ENCODE measurements at regions of chr4 and their contacts with region 1.

Region 1: DNA sequence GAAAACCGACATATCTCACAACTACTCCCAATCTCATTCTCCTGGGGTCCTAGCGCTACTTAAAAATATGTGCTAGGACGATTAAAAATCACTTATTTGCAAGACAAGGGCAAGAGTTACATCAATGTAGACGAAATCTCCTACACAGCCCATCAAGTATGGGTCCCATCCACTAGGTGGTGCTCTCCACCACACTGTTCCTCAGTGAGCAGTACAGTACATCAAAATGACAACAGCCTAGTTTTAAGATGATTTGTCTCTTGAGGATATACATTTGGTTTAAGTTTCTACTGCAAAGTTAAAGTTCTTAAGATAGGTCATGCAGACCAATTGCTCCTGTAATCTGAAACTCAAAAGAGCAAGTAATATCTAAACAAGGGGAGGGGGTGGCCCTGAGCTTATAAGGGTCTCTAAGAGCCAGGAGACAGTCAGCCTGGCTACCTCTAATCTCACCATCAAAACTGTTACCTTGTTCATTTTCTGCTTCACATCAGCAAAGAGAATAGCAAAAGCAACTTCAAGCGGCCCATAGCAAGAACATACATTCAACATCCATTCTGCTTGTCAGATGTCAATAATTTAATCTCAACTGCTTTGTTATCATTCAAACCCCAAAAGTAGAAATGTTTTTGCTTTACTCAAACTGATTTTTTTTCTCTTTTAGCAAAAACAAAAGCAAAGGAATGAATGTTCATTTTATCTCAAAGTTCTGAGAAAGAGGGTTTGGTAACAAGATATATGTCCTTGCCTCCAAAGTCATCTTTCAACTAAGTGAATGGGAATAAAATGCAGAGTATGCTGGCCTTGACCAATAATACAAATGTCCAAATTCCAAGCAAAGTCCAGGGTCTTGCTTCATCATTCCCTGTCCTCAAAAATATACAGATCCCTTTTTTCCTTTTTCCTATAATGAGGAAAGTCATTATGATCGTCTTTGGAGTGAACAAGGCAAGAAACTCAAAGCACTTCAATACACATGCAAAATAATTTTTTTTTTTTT is 53.1 kb downstream of the STX18 start:
- DNase-seq: peak; percentile 86
- ATAC-seq: peak; percentile 86
- H3K4me3 Mint-ChIP-seq: no peak overlapping the region
- H3K27ac Mint-ChIP-seq: no peak overlapping the region
- H3K4me1 Mint-ChIP-seq: peaks cover 12% of the 10 kb centered on the region
- H3K27me3 Mint-ChIP-seq: no peaks in the 10 kb centered on the region

Region 2: DNA sequence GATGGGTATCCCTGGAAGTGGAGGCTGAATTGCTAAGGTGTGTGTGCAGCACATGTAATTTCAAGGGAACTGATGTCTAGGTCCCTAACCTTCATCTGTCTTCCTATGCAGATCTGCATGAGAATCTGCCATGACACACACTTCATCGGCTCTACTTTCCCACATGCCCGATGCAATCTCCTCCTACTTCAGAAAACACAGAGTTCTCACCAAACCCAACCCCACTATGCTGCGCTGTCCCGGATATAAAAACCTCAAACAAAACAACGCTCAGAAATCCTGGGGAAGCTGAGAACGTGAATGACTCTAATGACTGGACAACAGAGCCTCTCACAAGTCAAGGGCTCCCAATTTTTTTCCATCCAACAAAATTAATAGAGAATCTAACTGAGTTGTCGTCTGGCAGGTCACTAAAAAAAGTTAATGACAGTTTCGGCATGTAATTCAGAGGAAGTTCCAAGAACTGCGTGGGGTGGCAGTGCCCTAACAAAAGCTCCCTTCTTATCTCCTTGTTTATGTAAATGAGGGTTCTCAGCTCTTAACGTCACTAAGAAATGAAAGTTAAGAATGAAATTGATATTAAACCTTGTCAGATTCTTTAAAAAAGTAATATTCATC is 14.1 kb after region 1 on chr4:
- CTCF ChIA-PET with region 1: interaction called, 6 read pairs
- POLR2A ChIA-PET with region 1: no interaction called
- intact Hi-C with region 1: loop called in 1 of 2 experiments (anchors 1 kb)
- DNase-seq: peak; percentile 55
- ATAC-seq: peak; percentile 96
- H3K4me3 Mint-ChIP-seq: peak overlapping the region; percentile 66
- H3K27ac Mint-ChIP-seq: peak overlapping the region; percentile 82
- H3K4me1 Mint-ChIP-seq: peaks cover 17% of the 10 kb centered on the region
- H3K27me3 Mint-ChIP-seq: no peaks in the 10 kb centered on the region

Region 3: DNA sequence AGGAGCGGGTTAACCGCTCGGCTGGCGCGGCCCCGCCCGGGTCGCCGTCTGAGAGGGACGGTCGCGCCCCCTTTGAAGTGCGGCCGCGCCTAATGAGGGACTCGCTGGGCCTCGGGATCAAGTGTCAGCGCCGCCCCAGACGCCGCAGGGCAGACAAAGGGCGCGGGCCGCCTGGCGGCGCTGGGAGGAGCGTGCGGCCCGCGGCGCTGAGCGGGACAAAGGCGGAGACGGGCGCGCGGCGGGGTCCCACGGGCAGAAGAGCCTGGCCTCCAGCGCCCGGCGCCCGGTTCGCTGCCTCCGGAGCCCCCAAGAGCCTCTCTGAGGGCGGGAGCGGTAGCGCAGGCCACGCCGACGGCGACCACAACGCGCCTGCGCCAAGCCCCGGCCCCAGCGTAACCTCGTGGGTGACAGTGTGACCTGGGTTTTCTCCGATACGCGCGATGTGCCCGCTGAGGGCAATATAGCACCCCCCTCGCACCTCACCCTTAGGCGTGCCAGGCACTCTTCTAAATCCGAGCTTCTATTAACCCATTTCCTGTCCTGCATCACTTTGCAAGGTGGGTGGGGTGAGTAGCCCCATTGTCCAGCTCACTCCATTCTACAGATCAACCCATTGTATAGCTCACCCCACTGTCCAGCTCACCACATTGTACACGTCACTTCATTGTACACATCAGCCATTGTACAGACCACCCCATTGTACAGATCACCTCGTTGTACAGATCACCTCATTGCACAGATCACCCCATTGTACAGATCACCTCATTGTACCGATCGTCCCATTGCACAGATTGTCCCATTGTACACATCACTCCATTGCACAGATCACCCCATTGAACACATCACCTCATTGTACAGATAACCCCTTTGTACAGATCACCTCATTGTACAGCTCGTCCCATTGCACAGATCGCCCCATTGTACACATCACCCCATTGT is 86.8 kb after region 1 on chr4:
- CTCF ChIA-PET with region 1: interaction called, 6 read pairs
- POLR2A ChIA-PET with region 1: no interaction called
- intact Hi-C with region 1: loop called in 1 of 2 experiments (anchors 1 kb)
- DNase-seq: peak; percentile 78
- ATAC-seq: peak; percentile 86
- H3K4me3 Mint-ChIP-seq: peak overlapping the region; percentile 60
- H3K27ac Mint-ChIP-seq: no peak overlapping the region
- H3K4me1 Mint-ChIP-seq: peaks cover 13% of the 10 kb centered on the region
- H3K27me3 Mint-ChIP-seq: no peaks in the 10 kb centered on the region

Region 4: GRCh38 chr4:4762909-4763821 is 274.5 kb after region 1 on chr4:
- CTCF ChIA-PET with region 1: no interaction called
- POLR2A ChIA-PET with region 1: no interaction called
- intact Hi-C with region 1: loop called (anchors 2 to 10 kb)
- DNase-seq: peak; percentile 72
- ATAC-seq: peak; percentile 98
- H3K4me3 Mint-ChIP-seq: no peak overlapping the region
- H3K27ac Mint-ChIP-seq: no peak overlapping the region
- H3K4me1 Mint-ChIP-seq: peaks cover 14% of the 10 kb centered on the region
- H3K27me3 Mint-ChIP-seq: peaks cover 10% of the 10 kb centered on the region

Region 5: GRCh38 chr4:4867375-4868039 is 378.8 kb after region 1 on chr4:
- CTCF ChIA-PET with region 1: interaction called, 4 read pairs
- POLR2A ChIA-PET with region 1: no interaction called
- intact Hi-C with region 1: loop called in 1 of 2 experiments (anchors 5 kb)
- DNase-seq: peak; percentile 46
- ATAC-seq: no peak
- H3K4me3 Mint-ChIP-seq: no peak overlapping the region
- H3K27ac Mint-ChIP-seq: no peak overlapping the region
- H3K4me1 Mint-ChIP-seq: peaks cover 17% of the 10 kb centered on the region
- H3K27me3 Mint-ChIP-seq: peaks cover 68% of the 10 kb centered on the region

Region 6: DNA sequence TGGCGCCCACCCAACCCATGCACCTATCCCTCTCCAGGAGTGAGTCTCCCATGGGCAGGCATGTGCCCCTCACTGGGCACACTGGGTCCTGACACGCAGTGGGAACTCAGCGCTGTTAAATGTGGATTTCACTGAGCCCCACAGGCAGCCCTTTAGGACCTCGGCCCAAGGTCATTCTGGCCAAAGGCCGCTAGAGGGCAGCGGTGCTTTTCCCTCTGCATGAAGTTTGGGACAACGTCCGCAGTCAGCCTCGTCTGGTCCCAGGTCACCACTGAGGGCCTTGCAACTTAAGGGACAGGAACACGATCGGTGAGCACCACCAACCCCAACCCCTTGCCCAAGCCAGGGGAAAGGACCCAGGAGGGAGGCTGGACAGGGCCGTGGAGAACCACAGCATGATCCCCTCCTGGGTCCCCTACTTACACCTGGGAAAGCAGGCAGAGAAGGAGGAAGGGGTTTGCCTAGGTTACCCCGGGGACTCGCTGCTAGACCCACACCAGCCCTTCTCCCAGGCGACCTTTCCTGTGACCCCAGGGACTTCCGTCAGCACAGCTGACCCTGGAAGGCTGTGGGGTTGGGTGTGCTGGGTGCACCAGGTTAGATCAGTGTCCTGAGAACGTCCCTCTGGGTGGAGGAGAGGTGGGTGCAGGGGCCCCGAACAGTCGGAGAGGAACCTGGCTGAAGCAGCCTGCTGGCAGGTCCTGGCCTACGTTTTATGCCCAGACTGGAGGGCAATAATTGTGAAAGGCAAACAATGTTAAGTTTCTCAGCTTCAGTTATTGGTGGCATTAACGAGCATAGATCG is 506.6 kb after region 1 on chr4:
- CTCF ChIA-PET with region 1: no interaction called
- POLR2A ChIA-PET with region 1: no interaction called
- intact Hi-C with region 1: loop called (anchors 2 to 5 kb)
- DNase-seq: peak; percentile 74
- ATAC-seq: peak; percentile 80
- H3K4me3 Mint-ChIP-seq: no peak overlapping the region
- H3K27ac Mint-ChIP-seq: no peak overlapping the region
- H3K4me1 Mint-ChIP-seq: no peaks in the 10 kb centered on the region
- H3K27me3 Mint-ChIP-seq: peaks cover 13% of the 10 kb centered on the region

Region 7: GRCh38 chr4:5812506-5813229 is 1324.0 kb after region 1 on chr4:
- CTCF ChIA-PET with region 1: no interaction called
- POLR2A ChIA-PET with region 1: no interaction called
- intact Hi-C with region 1: loop called in 1 of 2 experiments (anchors 5 kb)
- DNase-seq: peak; percentile 35
- ATAC-seq: peak; percentile 49
- H3K4me3 Mint-ChIP-seq: no peak overlapping the region
- H3K27ac Mint-ChIP-seq: no peak overlapping the region
- H3K4me1 Mint-ChIP-seq: no peaks in the 10 kb centered on the region
- H3K27me3 Mint-ChIP-seq: peaks cover 3% of the 10 kb centered on the region